Breast epithelium (tissue), 4 donors: ENCODE measurements at regions of chr4 and their contacts with region 1.

Region 1: GRCh38 chr4:66212489-66212888 is 542.2 kb upstream of the EPHA5 start:
- DNase-seq: no peak
- H3K4me3 ChIP-seq: no peak overlapping the region
- H3K27ac ChIP-seq: no peak overlapping the region
- H3K4me1 ChIP-seq: no peaks in the 10 kb centered on the region
- H3K27me3 ChIP-seq: no peaks in the 10 kb centered on the region
- CTCF ChIP-seq: no peak
- POLR2A ChIP-seq: no peak

Region 2: DNA sequence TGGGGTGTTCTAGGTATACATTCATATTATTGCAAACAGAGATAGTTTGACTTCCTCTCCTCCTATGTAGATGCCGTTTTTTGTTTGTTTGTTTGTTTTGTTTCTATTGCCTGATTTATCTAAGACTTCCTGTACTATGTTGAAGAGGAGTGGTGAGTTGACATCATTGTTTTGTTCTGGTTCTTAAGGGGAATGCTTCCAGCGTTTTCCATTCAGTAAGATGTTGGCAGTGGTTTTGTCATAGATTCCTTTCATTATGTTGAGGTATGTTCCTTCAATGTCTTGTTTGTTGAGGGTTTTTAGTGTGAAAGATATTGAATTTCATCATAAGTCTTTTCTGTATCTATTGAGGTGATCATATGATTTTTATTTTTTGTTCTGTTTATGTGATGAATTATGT is 140.6 kb before region 1 on chr4:
- intact Hi-C with region 1: loop called (anchors 5 kb)
- DNase-seq: no peak
- H3K4me3 ChIP-seq: no peak overlapping the region
- H3K27ac ChIP-seq: no peak overlapping the region
- H3K4me1 ChIP-seq: no peaks in the 10 kb centered on the region
- H3K27me3 ChIP-seq: no peaks in the 10 kb centered on the region
- CTCF ChIP-seq: no peak
- POLR2A ChIP-seq: no peak